Activated B cell treated with CpG ODN at 0.5 μM for 24 hours (primary cell): ENCODE measurements at regions of chr6 and their contacts with region 1.

Region 1: DNA sequence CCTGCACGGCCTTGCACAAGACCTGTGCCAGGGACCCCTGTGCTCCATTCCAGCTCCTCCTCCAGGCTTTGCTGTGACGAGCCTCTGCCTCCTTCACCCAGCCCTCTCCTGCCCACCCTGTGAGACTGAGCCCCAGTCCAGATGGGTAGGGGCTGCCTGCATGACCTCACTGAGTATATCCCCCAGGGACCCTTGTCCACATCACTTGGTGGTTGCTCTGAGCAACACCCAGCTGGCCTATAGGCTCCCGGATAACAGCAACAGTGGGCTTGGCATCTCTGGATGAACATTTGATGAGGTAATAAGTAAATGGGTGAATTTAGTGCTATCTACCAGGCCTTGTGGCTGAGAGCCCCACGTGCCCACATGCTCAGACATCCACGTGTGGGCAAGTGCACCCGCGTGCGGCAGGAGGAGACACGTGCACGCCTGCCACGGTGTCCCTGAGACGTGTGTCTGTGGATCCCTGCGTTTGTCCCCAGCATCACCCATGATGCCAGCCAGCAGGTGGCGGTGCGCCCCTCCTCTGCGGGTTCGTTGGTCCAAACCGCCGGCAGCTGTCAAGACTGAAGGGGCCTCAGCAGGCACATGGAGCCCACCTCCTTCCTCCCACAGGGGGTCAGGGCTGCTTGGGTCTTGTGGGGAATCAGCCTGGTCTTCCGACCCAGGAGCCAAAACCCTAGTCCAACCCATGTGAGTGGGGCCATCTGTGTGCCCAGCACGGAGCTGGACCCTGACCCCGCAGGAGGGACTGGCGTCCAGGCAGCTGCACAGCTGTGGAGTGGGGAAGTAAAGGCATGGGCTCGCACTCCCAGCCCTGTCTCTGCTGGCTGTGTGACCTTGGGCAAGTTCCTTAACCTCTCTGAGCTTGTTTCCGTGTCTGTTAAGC is 45.9 kb downstream of the FGD2 start:
- DNase-seq: peak; percentile 89
- ATAC-seq: peak; percentile 44
- H3K4me3 Mint-ChIP-seq: peak overlapping the region; percentile 64
- H3K27ac Mint-ChIP-seq: peak overlapping the region; percentile 98
- H3K4me1 Mint-ChIP-seq: peaks cover 58% of the 10 kb centered on the region
- H3K27me3 Mint-ChIP-seq: peaks cover 1% of the 10 kb centered on the region
- CTCF ChIP-seq: no peak

Region 2: DNA sequence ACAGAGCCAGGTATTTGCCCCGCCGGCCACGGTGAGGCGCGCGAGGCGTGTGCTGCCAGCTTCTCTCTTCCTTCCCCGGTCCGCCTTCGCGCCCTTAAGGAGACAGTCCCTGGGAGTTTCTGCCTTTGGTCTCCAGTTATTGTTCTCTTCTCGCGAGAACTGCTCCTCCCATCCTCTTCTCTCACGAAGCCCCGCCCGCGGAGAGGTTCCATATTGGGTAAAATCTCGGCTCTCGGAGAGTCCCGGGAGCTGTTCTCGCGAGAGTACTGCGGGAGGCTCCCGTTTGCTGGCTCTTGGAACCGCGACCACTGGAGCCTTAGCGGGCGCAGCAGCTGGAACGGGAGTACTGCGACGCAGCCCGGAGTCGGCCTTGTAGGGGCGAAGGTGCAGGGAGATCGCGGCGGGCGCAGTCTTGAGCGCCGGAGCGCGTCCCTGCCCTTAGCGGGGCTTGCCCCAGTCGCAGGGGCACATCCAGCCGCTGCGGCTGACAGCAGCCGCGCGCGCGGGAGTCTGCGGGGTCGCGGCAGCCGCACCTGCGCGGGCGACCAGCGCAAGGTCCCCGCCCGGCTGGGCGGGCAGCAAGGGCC is 1023.8 kb before region 1 on chr6 and contains the start of gene MAPK14:
- CTCF ChIA-PET with region 1: no interaction called
- POLR2A ChIA-PET with region 1: no interaction called
- intact Hi-C with region 1: no loop called
- DNase-seq: peak; percentile 92
- ATAC-seq: peak; percentile 91
- H3K4me3 Mint-ChIP-seq: peak within 1 kb of the TSS; percentile 92
- H3K27ac Mint-ChIP-seq: peak within 1 kb of the TSS; percentile 95
- H3K4me1 Mint-ChIP-seq: peaks cover 40% of the 10 kb centered on the region
- H3K27me3 Mint-ChIP-seq: peaks cover 16% of the 10 kb centered on the region
- CTCF ChIP-seq: no peak
- total RNA-seq, gene MAPK14: 39.7 and 45.4 TPM in 2 replicates

Region 3: DNA sequence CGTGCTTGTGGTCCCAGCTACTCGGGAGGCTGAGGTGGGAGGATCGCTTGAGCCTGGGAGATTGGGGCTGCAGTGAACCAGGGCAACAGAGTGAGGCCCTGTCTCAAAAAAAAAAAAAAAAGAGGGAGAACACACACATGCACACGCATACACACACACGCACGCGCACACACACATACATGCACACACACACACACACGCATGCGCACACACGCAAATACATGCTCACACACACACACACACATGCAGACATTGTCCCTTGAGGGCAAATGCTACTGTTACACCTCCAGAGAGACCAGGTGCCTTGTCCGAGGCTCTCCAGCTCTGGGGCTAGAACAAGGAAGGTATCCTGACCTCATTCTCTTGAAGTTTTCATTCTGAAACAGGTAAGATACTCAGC is 289.3 kb before region 1 on chr6:
- CTCF ChIA-PET with region 1: no interaction called
- POLR2A ChIA-PET with region 1: no interaction called
- intact Hi-C with region 1: no loop called
- DNase-seq: no peak
- ATAC-seq: no peak
- H3K4me3 Mint-ChIP-seq: no peak overlapping the region
- H3K27ac Mint-ChIP-seq: no peak overlapping the region
- H3K4me1 Mint-ChIP-seq: peaks cover 50% of the 10 kb centered on the region
- H3K27me3 Mint-ChIP-seq: no peaks in the 10 kb centered on the region
- CTCF ChIP-seq: no peak

Region 4: GRCh38 chr6:36885461-36886401 is 165.7 kb before region 1 on chr6 and contains the start of gene C6orf89:
- CTCF ChIA-PET with region 1: interaction called, 7 read pairs
- POLR2A ChIA-PET with region 1: no interaction called
- intact Hi-C with region 1: loop called (anchors 1 kb)
- DNase-seq: peak; percentile 89
- ATAC-seq: peak; percentile 99
- H3K4me3 Mint-ChIP-seq: peak within 1 kb of the TSS; percentile 89
- H3K27ac Mint-ChIP-seq: peak within 1 kb of the TSS; percentile 94
- H3K4me1 Mint-ChIP-seq: peaks cover 30% of the 10 kb centered on the region
- H3K27me3 Mint-ChIP-seq: no peaks in the 10 kb centered on the region
- CTCF ChIP-seq: peak; percentile 34
- total RNA-seq, gene C6orf89: 29.7 and 30.3 TPM in 2 replicates

Region 5: GRCh38 chr6:37018198-37019064 is 33.0 kb before region 1 on chr6:
- CTCF ChIA-PET with region 1: interaction called, 97 read pairs
- POLR2A ChIA-PET with region 1: interaction called, 519 read pairs
- intact Hi-C with region 1: loop called (anchors 1 kb)
- DNase-seq: peak; percentile 72
- ATAC-seq: peak; percentile 95
- H3K4me3 Mint-ChIP-seq: no peak overlapping the region
- H3K27ac Mint-ChIP-seq: peak overlapping the region; percentile 73
- H3K4me1 Mint-ChIP-seq: peaks cover 31% of the 10 kb centered on the region
- H3K27me3 Mint-ChIP-seq: no peaks in the 10 kb centered on the region
- CTCF ChIP-seq: peak; percentile 83

Region 6: GRCh38 chr6:37039958-37040357 is 11.4 kb before region 1 on chr6:
- CTCF ChIA-PET with region 1: interaction called, 15 read pairs
- POLR2A ChIA-PET with region 1: interaction called, 519 read pairs
- intact Hi-C with region 1: loop called (anchors 1 kb)
- DNase-seq: no peak
- ATAC-seq: peak; percentile 63
- H3K4me3 Mint-ChIP-seq: no peak overlapping the region
- H3K27ac Mint-ChIP-seq: peak overlapping the region; percentile 80
- H3K4me1 Mint-ChIP-seq: peaks cover 19% of the 10 kb centered on the region
- H3K27me3 Mint-ChIP-seq: no peaks in the 10 kb centered on the region
- CTCF ChIP-seq: no peak

Region 7: DNA sequence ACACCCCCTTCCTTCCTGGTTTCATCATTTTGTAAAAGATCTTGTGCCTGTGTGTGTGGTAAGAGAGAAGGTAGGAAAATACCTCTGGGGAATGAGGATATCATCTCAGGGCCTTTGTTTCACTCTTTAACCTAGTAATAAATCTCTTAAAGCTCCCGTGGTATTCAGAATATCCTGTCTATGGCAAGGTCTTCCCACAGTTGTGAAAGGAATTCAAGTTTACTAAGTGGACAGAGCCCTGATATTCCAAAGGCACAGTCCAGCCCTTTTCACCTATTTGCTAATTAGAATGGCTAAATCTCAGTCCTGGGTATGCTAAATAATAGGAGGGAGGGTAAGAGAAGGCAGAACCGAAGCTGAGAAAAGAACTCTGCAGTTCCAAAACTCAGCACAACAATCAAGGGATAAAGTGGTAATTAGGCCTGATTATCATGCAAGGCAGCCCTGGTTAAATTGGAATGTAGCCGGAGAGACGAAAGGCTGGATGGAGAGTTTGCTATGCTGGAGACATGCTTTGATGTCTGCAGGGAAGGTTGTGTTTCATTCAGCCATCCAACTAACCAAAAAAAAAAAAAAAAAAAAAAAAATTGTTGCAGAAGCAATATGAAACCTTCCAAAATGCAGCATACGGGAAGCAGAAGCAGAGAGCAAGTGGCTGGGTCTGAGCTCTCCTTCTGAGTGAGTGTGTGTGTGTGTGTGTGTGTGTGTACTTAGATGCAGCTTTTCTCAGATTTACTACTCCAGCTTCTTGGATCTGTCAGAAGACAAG is 90.1 kb after region 1 on chr6:
- CTCF ChIA-PET with region 1: interaction called, 4 read pairs
- POLR2A ChIA-PET with region 1: interaction called, 59 read pairs
- intact Hi-C with region 1: no loop called
- DNase-seq: no peak
- ATAC-seq: no peak
- H3K4me3 Mint-ChIP-seq: no peak overlapping the region
- H3K27ac Mint-ChIP-seq: peak overlapping the region; percentile 62
- H3K4me1 Mint-ChIP-seq: peaks cover 51% of the 10 kb centered on the region
- H3K27me3 Mint-ChIP-seq: no peaks in the 10 kb centered on the region
- CTCF ChIP-seq: no peak

Region 8: DNA sequence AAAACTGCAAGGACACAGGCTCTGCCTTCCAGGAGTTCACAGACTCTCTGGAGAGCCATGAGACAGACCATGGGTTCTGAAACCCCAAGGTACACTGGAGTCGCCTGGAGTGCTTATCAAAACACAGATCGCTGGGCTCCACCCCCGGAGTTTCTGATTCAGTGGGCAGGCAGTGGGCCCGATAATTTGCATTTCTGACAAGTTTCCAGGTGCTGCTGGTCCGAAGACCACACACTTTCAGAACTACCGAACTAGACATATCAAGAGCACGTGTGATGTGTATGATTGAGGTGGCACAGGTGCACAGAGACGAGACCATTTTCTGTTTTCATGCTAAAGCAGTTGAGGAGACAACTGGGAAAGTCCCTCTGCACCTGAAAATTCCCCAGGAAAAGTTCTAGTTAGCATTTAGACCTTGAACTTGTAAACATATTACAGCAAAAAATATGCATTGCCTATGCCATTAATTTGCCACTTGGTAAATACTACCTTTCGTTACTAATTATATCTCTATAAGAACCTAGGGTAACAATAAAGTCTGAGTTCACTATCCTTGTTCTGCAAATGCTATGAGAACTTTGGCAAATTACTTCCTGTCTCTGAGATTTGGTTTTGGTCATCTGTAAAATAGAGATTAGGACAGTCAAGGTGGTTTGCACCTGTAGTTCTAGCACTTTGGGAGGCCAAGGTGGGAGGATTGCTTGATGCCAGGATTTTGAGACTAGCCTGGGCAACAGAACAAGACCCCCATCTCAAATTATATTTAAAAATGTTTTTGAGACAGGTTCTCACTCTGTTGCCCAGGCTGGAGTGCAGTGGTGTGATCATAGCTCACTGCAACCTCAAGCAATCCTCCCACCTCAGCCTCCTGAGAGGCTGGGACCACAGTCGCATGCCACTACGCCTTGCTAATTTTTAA is 104.3 kb after region 1 on chr6:
- CTCF ChIA-PET with region 1: interaction called, 9 read pairs
- POLR2A ChIA-PET with region 1: interaction called, 118 read pairs
- intact Hi-C with region 1: loop called (anchors 1 kb)
- DNase-seq: peak; percentile 66
- ATAC-seq: peak; percentile 85
- H3K4me3 Mint-ChIP-seq: peak overlapping the region; percentile 59
- H3K27ac Mint-ChIP-seq: peak overlapping the region; percentile 97
- H3K4me1 Mint-ChIP-seq: peaks cover 65% of the 10 kb centered on the region
- H3K27me3 Mint-ChIP-seq: no peaks in the 10 kb centered on the region
- CTCF ChIP-seq: no peak

Region 9: GRCh38 chr6:37169496-37170272 is 118.3 kb after region 1 on chr6 and contains the start of gene PIM1:
- CTCF ChIA-PET with region 1: interaction called, 289 read pairs
- POLR2A ChIA-PET with region 1: interaction called, 956 read pairs
- intact Hi-C with region 1: loop called (anchors 1 kb)
- DNase-seq: peak; percentile 88
- ATAC-seq: peak; percentile 84
- H3K4me3 Mint-ChIP-seq: peak within 1 kb of the TSS; percentile 95
- H3K27ac Mint-ChIP-seq: peak within 1 kb of the TSS; percentile 96
- H3K4me1 Mint-ChIP-seq: peaks cover 47% of the 10 kb centered on the region
- H3K27me3 Mint-ChIP-seq: no peaks in the 10 kb centered on the region
- CTCF ChIP-seq: no peak
- total RNA-seq, gene PIM1: 272 and 283 TPM in 2 replicates

Region 10: DNA sequence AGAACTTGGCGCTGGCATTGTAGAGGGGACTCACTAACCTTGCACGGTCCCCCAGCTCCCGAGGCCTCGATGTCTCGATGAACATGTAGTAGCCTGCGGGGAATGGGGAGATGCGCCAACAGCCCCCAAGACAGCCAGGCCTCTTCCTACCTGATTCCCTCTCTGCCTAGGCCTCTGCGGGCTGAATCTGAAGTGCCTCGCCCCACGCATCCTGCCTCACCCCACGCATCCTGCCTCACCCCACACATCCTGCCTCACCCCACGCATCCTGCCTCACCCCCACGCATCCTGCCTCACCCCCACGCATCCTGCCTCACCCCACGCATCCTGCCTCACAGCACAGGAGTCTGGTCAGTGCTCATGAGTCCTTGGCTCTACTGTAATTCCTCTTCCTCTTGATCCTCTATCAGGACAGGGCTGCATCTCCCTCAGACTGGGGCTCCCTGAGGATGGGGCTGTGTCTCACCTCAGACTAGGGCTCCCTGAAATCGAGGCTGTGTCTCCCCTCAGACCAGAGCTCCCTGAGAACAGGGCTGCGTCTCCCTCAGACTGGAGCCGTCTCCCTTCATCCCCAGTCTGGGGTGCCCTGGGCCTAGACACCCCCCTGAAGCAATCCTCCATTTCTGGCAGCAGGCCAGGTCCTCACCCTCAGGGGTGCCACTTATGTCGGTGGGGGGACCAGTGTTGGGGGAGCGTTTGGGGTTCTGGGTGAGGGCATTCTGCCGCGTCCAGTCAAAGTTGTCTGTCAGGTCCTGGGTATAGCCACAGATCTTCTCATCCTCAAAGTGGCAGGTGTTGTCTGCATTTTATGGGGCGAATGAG is 592.7 kb after region 1 on chr6:
- CTCF ChIA-PET with region 1: no interaction called
- POLR2A ChIA-PET with region 1: no interaction called
- intact Hi-C with region 1: no loop called
- DNase-seq: no peak
- ATAC-seq: no peak
- H3K4me3 Mint-ChIP-seq: no peak overlapping the region
- H3K27ac Mint-ChIP-seq: no peak overlapping the region
- H3K4me1 Mint-ChIP-seq: peaks cover 11% of the 10 kb centered on the region
- H3K27me3 Mint-ChIP-seq: peaks cover 20% of the 10 kb centered on the region
- CTCF ChIP-seq: no peak